ENCODE measurements at regions of chr15 and their contacts with region 1.

Region 1: DNA sequence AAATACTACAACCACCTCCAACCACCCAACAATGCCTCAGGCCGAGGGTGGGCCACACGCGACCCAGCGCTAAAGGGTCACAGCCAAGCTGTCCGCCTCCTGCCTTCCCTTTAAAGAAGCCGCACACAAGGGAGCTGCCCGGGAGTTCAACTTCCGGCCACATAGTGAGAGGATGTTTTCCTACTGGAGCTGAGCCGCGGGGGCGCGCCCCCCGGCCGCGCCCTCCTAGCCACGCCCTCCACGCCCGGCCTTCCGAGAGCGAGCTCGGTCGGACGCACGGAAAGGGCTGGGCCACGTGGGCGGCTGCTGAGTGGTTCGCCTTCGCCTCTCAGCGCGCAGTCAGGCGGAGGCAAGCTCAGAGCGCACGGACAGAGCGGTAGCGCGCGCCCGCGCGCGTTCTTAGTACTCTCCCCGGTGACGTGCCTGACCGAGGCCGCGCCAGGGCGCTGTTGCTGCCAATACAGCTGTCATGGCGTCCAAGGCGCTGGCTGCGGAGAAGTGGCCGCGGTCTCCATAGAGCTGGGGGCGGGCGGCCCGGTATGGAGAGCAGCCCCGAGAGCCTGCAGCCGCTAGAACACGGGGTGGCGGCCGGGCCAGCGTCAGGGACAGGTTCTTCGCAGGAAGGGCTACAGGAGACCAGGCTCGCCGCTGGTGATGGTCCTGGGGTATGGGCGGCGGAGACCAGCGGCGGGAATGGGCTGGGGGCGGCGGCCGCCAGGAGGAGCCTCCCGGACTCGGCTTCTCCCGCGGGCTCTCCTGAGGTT is at the start of gene MINDY2:
- DNase-seq: peak; percentile 93
- ATAC-seq: peak; percentile 99
- H3K4me3 Mint-ChIP-seq: no peak within 1 kb of the TSS
- H3K27ac Mint-ChIP-seq: peak within 1 kb of the TSS; percentile 88
- H3K4me1 Mint-ChIP-seq: peaks cover 13% of the 10 kb centered on the region
- H3K27me3 Mint-ChIP-seq: no peaks in the 10 kb centered on the region
- total RNA-seq, gene MINDY2: 19.0 to 20.2 TPM

Region 2: GRCh38 chr15:58749532-58750337 is 21.3 kb before region 1 on chr15 and contains the start of gene ADAM10:
- POLR2A ChIA-PET with region 1: interaction called, 47 read pairs
- DNase-seq: peak; percentile 96
- ATAC-seq: peak; percentile 91
- H3K4me3 Mint-ChIP-seq: peak within 1 kb of the TSS; percentile 98
- H3K27ac Mint-ChIP-seq: peak within 1 kb of the TSS; percentile 97
- H3K4me1 Mint-ChIP-seq: peaks cover 25% of the 10 kb centered on the region
- H3K27me3 Mint-ChIP-seq: no peaks in the 10 kb centered on the region
- total RNA-seq, gene ADAM10: 173 to 175 TPM

Region 3: GRCh38 chr15:58785355-58785754 is 14.3 kb after region 1 on chr15:
- POLR2A ChIA-PET with region 1: no interaction called
- DNase-seq: no peak
- ATAC-seq: no peak
- H3K4me3 Mint-ChIP-seq: no peak overlapping the region
- H3K27ac Mint-ChIP-seq: no peak overlapping the region
- H3K4me1 Mint-ChIP-seq: no peaks in the 10 kb centered on the region
- H3K27me3 Mint-ChIP-seq: no peaks in the 10 kb centered on the region

Measured in activated naive CD8-positive, alpha-beta T cell treated with anti-CD3 and anti-CD28 coated beads, Interleukin-2, amount 10 ng/mL, durations not matched to agents 7 days and 5 days (primary cell).